Lower leg skin (tissue), 4 donors: ENCODE measurements at regions of chr5 and their contacts with region 1.

Region 1: GRCh38 chr5:88999853-89000252 is 116.9 kb upstream of the MEF2C start:
- DNase-seq: no peak
- H3K4me3 ChIP-seq: no peak overlapping the region
- CTCF ChIP-seq: no peak
- POLR2A ChIP-seq: no peak

Region 2: GRCh38 chr5:89028595-89029285 is 28.9 kb after region 1 on chr5:
- intact Hi-C with region 1: loop called (anchors 1 kb)
- DNase-seq: no peak
- H3K4me3 ChIP-seq: no peak overlapping the region
- CTCF ChIP-seq: no peak
- POLR2A ChIP-seq: no peak

Region 3: DNA sequence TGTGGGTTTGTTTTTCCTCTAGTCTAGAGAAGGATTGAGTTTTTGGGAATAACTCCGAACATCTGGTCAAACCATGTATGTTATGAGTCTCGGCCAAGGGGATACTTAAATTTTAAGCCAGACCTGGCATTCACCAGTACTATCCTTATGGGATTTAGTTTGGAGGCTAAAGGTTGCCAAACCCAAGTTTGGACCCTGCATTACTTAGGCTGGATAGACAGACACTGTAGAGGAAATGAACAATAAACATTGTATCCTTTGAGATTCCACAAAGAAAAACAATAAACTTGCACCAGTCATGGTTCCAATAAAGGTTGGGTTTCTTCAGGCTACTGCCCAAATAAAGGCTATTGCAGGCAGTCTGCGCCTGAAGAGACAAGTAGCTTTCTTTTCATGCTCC is 179.9 kb after region 1 on chr5:
- intact Hi-C with region 1: no loop called
- DNase-seq: no peak
- H3K4me3 ChIP-seq: no peak overlapping the region
- CTCF ChIP-seq: no peak
- POLR2A ChIP-seq: no peak